WTC11 (cell line): ENCODE measurements at regions of chr2 and their contacts with region 1.

Region 1: GRCh38 chr2:15748736-15749323 is 157.2 kb downstream of the DDX1 start:
- DNase-seq: peak; percentile 86
- ATAC-seq: peak; percentile 66
- H3K4me3 Mint-ChIP-seq: no peak overlapping the region
- H3K27ac Mint-ChIP-seq: no peak overlapping the region
- H3K4me1 Mint-ChIP-seq: peaks cover 22% of the 10 kb centered on the region
- H3K27me3 Mint-ChIP-seq: peaks cover 2% of the 10 kb centered on the region; the same call in 1 of the 2 replicates
- CTCF ChIP-seq: peak; percentile 94

Region 2: GRCh38 chr2:15636972-15637785 is 111.7 kb before region 1 on chr2:
- CTCF ChIA-PET with region 1: interaction called, 20 read pairs
- POLR2A ChIA-PET with region 1: interaction called, 3 read pairs
- DNase-seq: peak; percentile 74
- ATAC-seq: peak; percentile 95
- H3K4me3 Mint-ChIP-seq: no peak overlapping the region
- H3K27ac Mint-ChIP-seq: peak overlapping the region; percentile 50
- H3K4me1 Mint-ChIP-seq: peaks cover 28% of the 10 kb centered on the region
- H3K27me3 Mint-ChIP-seq: no peaks in the 10 kb centered on the region
- CTCF ChIP-seq: peak; percentile 85

Region 3: DNA sequence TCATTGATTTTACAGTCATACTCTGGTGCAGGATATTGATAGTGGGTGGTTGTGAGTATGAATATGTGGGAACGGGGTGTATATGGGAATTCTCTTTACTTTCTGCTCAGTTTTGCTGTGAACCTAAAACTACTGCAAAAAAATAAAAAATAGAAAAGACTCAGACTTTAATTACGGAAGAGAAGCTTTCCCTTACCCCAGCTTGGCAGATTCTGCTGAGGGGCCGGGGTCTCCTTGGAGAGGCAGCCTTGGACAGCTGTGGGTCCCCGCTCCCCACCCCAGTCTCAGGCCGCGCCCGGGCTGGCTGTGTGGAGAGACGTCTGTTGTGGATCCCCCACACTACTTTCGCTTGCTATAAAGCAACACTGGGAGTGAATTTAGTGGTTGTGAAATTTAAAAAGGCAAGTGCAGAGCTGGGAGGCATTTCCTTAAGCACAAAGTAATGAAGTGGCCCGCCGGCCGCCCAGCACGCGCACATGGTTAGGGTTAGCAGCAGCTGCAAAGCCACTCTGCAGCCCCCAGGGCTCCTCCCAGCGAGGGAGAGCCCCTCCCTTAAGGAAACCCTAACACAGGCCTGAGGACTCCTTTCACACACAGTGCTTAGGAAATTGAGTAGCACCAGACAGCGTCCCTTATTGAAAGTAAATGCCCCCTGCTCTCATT is 54.8 kb before region 1 on chr2:
- CTCF ChIA-PET with region 1: interaction called, 10 read pairs
- POLR2A ChIA-PET with region 1: no interaction called
- DNase-seq: no peak
- ATAC-seq: peak; percentile 39; the same call in 1 of the 2 replicates
- H3K4me3 Mint-ChIP-seq: no peak overlapping the region
- H3K27ac Mint-ChIP-seq: no peak overlapping the region
- H3K4me1 Mint-ChIP-seq: peaks cover 7% of the 10 kb centered on the region; the same call in 1 of the 2 replicates
- H3K27me3 Mint-ChIP-seq: peaks cover 4% of the 10 kb centered on the region; the same call in 1 of the 2 replicates
- CTCF ChIP-seq: no peak

Region 4: GRCh38 chr2:15704086-15704787 is 44.6 kb before region 1 on chr2:
- CTCF ChIA-PET with region 1: no interaction called
- POLR2A ChIA-PET with region 1: no interaction called
- DNase-seq: no peak
- ATAC-seq: no peak
- H3K4me3 Mint-ChIP-seq: no peak overlapping the region
- H3K27ac Mint-ChIP-seq: no peak overlapping the region
- H3K4me1 Mint-ChIP-seq: no peaks in the 10 kb centered on the region
- H3K27me3 Mint-ChIP-seq: no peaks in the 10 kb centered on the region
- CTCF ChIP-seq: no peak

Region 5: DNA sequence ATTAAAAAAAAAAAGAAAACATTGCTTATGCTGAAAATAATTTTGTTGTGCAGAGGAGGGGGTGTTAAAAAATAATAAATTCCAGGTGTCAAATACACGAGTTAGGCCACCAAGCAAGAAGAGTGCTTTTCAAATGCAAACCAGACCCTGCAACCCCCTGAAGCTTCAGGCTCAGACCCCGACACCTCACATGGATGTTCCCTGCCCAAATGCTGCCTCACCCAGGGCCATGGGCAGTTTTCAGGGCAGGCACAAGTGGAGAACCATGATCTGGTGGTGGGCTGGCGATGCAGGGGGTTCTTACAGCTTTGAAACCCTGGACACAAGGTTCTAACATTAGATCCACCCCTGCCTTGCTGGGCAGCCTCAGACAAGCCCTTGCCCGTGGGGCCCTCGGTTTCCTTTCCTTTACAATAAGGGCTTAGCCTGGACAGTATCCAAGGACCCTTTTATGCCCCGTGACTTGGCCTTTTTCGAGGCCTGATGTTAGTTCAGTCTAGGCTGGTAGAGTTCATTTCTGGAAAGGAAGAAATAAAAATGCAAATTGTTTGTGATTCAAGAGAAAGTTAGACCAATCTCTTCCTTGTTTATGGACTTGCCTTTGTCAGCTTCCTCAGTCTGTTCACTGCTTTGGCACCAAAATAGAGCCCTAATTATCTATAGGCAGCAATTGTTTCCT is 11.5 kb after region 1 on chr2:
- CTCF ChIA-PET with region 1: interaction called, 12 read pairs
- POLR2A ChIA-PET with region 1: interaction called, 3 read pairs
- DNase-seq: no peak
- ATAC-seq: no peak
- H3K4me3 Mint-ChIP-seq: no peak overlapping the region
- H3K27ac Mint-ChIP-seq: no peak overlapping the region
- H3K4me1 Mint-ChIP-seq: peaks cover 14% of the 10 kb centered on the region
- H3K27me3 Mint-ChIP-seq: no peaks in the 10 kb centered on the region
- CTCF ChIP-seq: no peak

Region 6: DNA sequence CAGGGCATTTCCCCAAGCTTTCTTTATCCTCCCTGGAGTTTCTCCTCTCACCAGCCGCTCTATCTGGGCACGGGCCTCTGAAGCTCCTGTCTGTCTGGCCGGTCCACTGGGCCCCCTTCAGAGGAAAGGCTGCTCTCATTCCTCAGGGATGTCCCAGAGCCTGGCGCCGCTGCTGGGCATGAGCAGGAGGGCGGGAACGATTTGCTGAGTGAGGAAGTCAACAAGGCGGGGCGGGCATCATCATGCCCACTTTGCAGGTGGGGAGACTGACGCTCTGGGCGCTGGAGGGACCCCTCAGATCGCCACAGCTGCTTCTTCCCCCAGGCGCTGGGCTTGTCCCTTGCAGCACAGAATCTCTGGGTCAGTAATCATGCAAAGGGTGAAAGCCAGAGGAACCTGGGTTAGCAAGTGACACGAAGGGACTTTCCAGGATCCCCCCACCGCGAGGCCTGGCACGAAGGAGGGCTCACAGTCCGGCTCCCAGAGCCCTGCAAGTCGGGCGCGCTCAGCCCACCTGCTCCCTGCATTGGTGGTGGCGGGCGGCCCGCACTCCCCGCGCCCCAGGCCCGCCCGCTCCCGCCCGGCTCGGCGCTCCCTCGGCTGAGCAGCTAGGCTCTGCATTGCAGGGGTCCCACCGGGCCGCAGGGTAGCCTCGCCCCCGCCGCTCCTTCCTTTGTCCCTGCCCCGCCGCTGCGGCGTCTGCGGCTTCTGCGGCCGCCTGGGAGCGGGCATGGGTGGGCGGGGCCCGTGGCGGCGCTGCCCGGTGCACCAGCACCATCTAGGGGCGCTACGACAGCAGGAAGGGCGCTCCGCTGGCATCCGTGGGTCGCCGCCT is 759.0 kb after region 1 on chr2:
- CTCF ChIA-PET with region 1: interaction called, 16 read pairs
- POLR2A ChIA-PET with region 1: no interaction called
- DNase-seq: peak; percentile 73
- ATAC-seq: peak; percentile 85
- H3K4me3 Mint-ChIP-seq: peak overlapping the region; percentile 73
- H3K27ac Mint-ChIP-seq: no peak overlapping the region
- H3K4me1 Mint-ChIP-seq: peaks cover 10% of the 10 kb centered on the region
- H3K27me3 Mint-ChIP-seq: peaks cover 19% of the 10 kb centered on the region
- CTCF ChIP-seq: peak; percentile 48; the same call in 1 of the 2 replicates